Prostate gland (tissue), 2 donors: ENCODE measurements at regions of chr17 and their contacts with region 1.

Region 1: GRCh38 chr17:57243171-57243948 is 13.0 kb upstream of the MSI2 start:
- DNase-seq: peak; percentile 61
- H3K4me3 ChIP-seq: no peak overlapping the region
- H3K27ac ChIP-seq: no peak overlapping the region
- H3K4me1 ChIP-seq: no peaks in the 10 kb centered on the region
- H3K27me3 ChIP-seq: no peaks in the 10 kb centered on the region
- CTCF ChIP-seq: peak; percentile 95 to 99 (median 98)
- POLR2A ChIP-seq: no peak

Region 2: GRCh38 chr17:57480438-57481196 is 237.3 kb after region 1 on chr17:
- intact Hi-C with region 1: loop called (anchors 5 kb)
- DNase-seq: peak; percentile 19
- H3K4me3 ChIP-seq: no peak overlapping the region
- H3K27ac ChIP-seq: no peak overlapping the region
- H3K4me1 ChIP-seq: peaks cover 3% of the 10 kb centered on the region
- H3K27me3 ChIP-seq: no peaks in the 10 kb centered on the region
- CTCF ChIP-seq: no peak
- POLR2A ChIP-seq: no peak